ENCODE measurements at regions of chr14 and their contacts with region 1.

Region 1: DNA sequence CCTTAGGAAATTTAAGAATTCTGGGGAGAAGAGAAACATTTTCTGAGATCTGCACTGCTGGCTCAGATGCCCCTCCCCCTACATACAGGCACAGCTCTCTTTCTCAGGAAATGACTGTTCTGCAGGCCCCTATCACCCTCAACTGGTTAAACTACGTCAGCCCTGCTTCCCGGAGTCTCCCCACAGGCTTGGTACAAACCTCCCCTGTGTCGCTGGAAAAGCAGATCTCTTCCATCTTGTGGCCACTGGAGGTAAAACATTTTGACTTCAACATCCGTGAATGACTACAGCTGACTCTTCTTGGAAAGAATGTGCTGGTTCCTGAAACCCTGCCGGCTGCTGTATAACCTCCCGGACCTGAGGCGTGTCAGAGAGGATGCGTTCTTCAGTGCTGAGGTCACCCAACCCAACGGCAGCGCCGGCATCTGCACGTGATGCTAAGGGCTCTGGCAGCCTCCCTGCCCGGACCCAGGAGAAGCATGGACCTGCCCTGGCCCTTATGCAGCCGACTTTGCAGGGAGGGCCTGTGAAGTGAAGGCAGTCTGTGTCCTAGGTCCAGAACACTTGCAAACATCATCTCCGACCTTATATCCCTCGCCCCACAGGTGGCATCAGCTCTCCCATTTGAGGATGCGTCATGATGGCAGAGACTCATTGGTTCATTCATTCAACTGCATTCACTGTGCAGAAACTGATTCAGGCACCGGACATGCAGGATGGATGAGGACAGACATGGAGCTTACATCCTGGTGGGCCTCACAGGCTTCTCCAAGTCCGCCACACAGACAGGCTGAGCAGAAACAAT is 129.3 kb downstream of the GCH1 start:
- DNase-seq: peak; percentile 80 to 94 (median 87)
- ATAC-seq: peak; percentile 96
- H3K4me3 ChIP-seq: peak overlapping the region; percentile 6; the same call in 1 of the 2 replicates
- H3K27ac ChIP-seq: peak overlapping the region; percentile 86
- H3K4me1 ChIP-seq: peaks cover 19 to 23% of the 10 kb centered on the region in 2 experiments; a peak in 4 of 5 replicates
- H3K27me3 ChIP-seq: no peaks in the 10 kb centered on the region
- CTCF ChIP-seq: peak; percentile 75 to 89 (median 89)
- EP300 ChIP-seq: peak; percentile 76
- POLR2A ChIP-seq: no peak
- RAD21 ChIP-seq: peak; percentile 70 to 92

Region 2: GRCh38 chr14:54329082-54329695 is 444.2 kb before region 1 on chr14:
- CTCF ChIA-PET with region 1: no interaction called
- POLR2A ChIA-PET with region 1: no interaction called
- in situ Hi-C with region 1: no loop called
- intact Hi-C with region 1: no loop called
- DNase-seq: peak; percentile 25 to 38 (median 32)
- ATAC-seq: peak; percentile 88
- H3K4me3 ChIP-seq: no peak overlapping the region
- H3K27ac ChIP-seq: no peak overlapping the region
- H3K4me1 ChIP-seq: no peaks in the 10 kb centered on the region
- H3K27me3 ChIP-seq: no peaks in the 10 kb centered on the region
- CTCF ChIP-seq: peak; percentile 43 to 62 (median 58)
- EP300 ChIP-seq: no peak
- POLR2A ChIP-seq: no peak
- RAD21 ChIP-seq: peak in 1 of 2 experiments; percentile 56; a peak in 3 of 4 replicates

Region 3: GRCh38 chr14:54366736-54367735 is 406.3 kb before region 1 on chr14:
- CTCF ChIA-PET with region 1: no interaction called
- POLR2A ChIA-PET with region 1: interaction called, 3 read pairs
- in situ Hi-C with region 1: no loop called
- intact Hi-C with region 1: loop called (anchors 10 kb)
- DNase-seq: peak in 3 of 4 experiments; percentile 12 to 59 (median 53)
- ATAC-seq: peak; percentile 97
- H3K4me3 ChIP-seq: no peak overlapping the region
- H3K27ac ChIP-seq: no peak overlapping the region
- H3K4me1 ChIP-seq: no peaks in the 10 kb centered on the region
- H3K27me3 ChIP-seq: peaks cover 3 to 21% of the 10 kb centered on the region in 2 experiments; a peak in 4 of 5 replicates
- CTCF ChIP-seq: peak; percentile 64 to 93 (median 87)
- EP300 ChIP-seq: no peak
- POLR2A ChIP-seq: no peak
- RAD21 ChIP-seq: peak; percentile 72 to 80

Region 4: DNA sequence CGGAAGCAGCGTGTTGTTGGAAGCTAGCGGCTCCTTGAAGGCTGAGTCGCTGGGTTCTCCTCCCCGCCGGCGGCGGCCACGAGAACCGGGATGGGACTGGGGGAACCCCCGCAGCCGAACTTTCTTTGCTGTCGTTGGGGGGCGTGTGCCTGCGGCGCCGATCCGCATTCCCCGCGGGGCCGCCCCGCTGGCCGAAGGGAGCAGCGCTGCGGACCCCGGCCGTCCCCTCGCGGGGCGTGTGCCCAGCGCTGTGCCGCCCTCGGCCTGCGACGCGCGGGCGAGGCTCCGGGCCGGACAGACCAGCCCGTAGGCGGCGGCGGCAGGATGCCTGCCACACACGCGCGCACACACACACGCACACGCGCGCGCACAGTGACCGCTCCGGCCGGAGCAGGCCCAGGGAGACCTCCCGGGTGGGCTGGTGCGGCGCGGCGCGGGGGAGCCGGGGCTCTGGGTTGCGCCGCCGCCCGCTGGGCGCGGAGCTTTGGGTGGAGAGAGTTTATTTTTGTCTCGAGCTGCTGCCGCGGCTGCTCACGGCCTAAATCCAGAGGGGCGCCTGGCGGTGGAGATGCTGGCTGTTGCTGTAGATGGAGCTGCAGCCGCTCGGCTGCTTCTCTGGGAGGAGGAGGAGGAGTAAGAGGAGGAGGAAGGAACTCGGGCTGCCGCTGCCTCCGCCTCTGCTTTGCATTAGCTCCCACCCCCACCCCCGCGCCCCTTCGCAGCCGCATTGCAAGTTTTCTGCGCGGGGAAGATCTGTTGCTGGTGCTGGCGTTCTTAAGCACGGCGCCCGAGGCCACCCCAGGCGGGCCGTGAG is 206.8 kb before region 1 on chr14 and contains the start of gene SAMD4A:
- CTCF ChIA-PET with region 1: interaction called, 52 read pairs
- POLR2A ChIA-PET with region 1: interaction called, 8 read pairs
- in situ Hi-C with region 1: loop called (anchors 5 kb)
- intact Hi-C with region 1: loop called (anchors 1 kb)
- DNase-seq: peak; percentile 37 to 86 (median 58)
- ATAC-seq: peak; percentile 66
- H3K4me3 ChIP-seq: peak within 1 kb of the TSS; percentile 69
- H3K27ac ChIP-seq: peak within 1 kb of the TSS; percentile 81
- H3K4me1 ChIP-seq: peaks cover 12 to 39% of the 10 kb centered on the region in 2 experiments; a peak in 4 of 5 replicates
- H3K27me3 ChIP-seq: no peaks in the 10 kb centered on the region
- CTCF ChIP-seq: peak in 2 of 3 experiments; percentile 46 to 53; a peak in 4 of 6 replicates
- EP300 ChIP-seq: no peak
- POLR2A ChIP-seq: peak; percentile 54; the same call in 1 of the 2 replicates
- RAD21 ChIP-seq: peak; percentile 14 to 27; a peak in 3 of 4 replicates
- polyA plus RNA-seq, gene SAMD4A: 0.66 to 1.9 TPM

Region 5: DNA sequence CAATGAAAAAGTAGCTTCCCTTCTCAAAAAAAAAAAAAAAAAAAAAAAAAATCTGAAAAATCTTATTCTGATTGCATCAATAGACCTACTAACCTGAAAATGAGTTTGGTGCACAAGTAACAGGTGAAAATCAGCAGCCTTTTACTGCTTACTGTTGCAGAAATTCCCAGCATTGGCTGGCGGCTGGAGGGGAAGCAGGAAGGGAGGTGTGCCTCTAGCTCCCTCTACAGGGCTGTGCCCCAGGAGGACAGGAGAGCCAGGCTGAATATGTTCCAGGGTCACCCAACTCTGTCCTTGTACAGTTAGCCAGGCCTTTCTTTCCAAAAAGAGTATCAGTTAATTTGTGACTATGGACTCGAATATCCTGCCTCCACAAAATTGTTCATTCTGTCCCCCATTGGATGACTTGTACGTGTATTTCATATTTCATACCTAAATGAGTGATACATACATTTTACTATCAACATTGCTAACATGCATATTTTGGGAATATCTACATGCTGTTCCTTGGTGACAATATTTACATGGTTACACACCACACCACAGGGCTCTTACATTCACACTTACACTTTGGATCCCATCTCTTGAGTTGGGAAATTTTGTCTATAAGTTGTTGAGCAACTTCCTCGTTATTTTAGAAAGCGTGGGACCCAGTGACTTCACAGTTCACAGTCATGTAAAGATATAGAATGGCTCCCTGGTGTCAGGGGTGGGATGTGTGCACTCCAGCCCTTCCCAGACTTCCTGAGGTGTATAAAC is 81.7 kb before region 1 on chr14:
- CTCF ChIA-PET with region 1: interaction called, 3 read pairs
- POLR2A ChIA-PET with region 1: no interaction called
- in situ Hi-C with region 1: no loop called
- intact Hi-C with region 1: loop called (anchors 5 kb)
- DNase-seq: peak; percentile 43 to 74 (median 59)
- ATAC-seq: peak; percentile 94
- H3K4me3 ChIP-seq: no peak overlapping the region
- H3K27ac ChIP-seq: no peak overlapping the region; the same call in 2 of the 3 replicates
- H3K4me1 ChIP-seq: peaks cover 0 to 6% of the 10 kb centered on the region in 2 experiments; a peak in 2 of 5 replicates
- H3K27me3 ChIP-seq: no peaks in the 10 kb centered on the region
- CTCF ChIP-seq: peak; percentile 79 to 83 (median 83)
- EP300 ChIP-seq: no peak
- POLR2A ChIP-seq: no peak
- RAD21 ChIP-seq: peak; percentile 57 to 69

Region 6: DNA sequence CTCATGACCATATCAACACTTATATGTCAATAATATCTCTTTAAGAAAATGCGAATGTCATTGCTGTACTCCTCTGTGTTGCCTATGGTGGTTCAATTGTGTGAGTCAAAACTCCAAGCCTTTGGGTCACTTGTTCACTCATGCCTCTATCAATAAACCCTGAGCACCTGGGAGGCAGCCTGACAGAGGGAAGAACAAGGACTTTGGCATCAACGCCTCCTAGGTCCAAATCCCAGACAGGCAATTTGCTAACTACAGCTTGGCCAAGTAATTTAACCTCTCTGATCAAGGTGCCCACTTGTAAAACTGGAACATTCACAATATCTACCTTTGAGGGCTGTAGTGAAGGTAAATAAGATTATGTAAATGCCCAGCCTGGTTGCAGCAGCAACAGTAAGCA is 68.6 kb before region 1 on chr14:
- CTCF ChIA-PET with region 1: no interaction called
- POLR2A ChIA-PET with region 1: no interaction called
- in situ Hi-C with region 1: no loop called
- intact Hi-C with region 1: no loop called
- DNase-seq: no peak
- ATAC-seq: no peak
- H3K4me3 ChIP-seq: no peak overlapping the region
- H3K27ac ChIP-seq: no peak overlapping the region
- H3K4me1 ChIP-seq: peaks cover 3 to 30% of the 10 kb centered on the region in 2 experiments; a peak in 2 of 5 replicates
- H3K27me3 ChIP-seq: no peaks in the 10 kb centered on the region
- CTCF ChIP-seq: no peak
- EP300 ChIP-seq: no peak
- POLR2A ChIP-seq: no peak
- RAD21 ChIP-seq: no peak

Region 7: DNA sequence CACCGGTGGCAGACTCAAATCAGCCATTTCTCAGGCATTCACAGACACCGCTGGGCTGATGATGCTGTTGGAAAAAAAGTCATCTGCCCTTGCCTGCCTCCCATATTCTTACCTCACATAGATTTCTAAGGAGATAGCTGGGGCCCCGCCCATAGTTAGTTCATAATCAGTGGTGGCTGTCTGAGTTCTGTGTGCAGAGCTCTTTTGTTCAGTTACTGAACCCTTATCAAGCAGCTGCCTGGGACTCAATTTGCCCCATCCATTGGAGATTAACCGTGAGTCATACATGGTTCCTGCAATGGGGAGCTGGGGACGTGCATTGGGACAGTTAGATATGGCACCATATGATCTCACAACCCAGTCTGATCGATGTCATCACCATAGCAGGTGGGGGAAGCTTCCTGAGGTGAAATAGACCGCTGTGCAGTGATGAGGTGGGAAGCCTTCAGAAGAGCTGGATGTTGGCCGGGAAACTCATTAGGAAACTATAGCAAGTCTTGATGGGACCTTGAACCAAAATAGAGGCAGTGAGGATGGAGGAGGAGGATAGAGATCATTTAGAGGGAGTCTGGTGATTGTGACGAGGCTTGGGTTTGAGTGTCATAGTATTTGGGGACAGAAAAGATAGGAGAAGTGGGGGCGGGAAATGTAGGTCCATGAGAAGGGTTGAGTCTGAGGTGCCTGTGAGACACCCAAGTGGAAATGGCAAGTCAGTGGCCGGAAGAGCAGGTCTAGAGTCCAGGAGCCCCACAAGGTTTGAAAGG is 18.6 kb before region 1 on chr14:
- CTCF ChIA-PET with region 1: no interaction called
- POLR2A ChIA-PET with region 1: interaction called, 6 read pairs
- in situ Hi-C with region 1: no loop called
- intact Hi-C with region 1: loop called (anchors 2 kb)
- DNase-seq: peak; percentile 83 to 95 (median 87)
- ATAC-seq: peak; percentile 91
- H3K4me3 ChIP-seq: peak overlapping the region; percentile 26
- H3K27ac ChIP-seq: peak overlapping the region; percentile 97
- H3K4me1 ChIP-seq: peaks cover 14 to 49% of the 10 kb centered on the region in 2 experiments
- H3K27me3 ChIP-seq: no peaks in the 10 kb centered on the region
- CTCF ChIP-seq: no peak
- EP300 ChIP-seq: peak; percentile 97
- POLR2A ChIP-seq: peak; percentile 77
- RAD21 ChIP-seq: no peak